Ascending aorta (tissue), 2 donors: ENCODE measurements at regions of chr3 and their contacts with region 1.

Region 1: DNA sequence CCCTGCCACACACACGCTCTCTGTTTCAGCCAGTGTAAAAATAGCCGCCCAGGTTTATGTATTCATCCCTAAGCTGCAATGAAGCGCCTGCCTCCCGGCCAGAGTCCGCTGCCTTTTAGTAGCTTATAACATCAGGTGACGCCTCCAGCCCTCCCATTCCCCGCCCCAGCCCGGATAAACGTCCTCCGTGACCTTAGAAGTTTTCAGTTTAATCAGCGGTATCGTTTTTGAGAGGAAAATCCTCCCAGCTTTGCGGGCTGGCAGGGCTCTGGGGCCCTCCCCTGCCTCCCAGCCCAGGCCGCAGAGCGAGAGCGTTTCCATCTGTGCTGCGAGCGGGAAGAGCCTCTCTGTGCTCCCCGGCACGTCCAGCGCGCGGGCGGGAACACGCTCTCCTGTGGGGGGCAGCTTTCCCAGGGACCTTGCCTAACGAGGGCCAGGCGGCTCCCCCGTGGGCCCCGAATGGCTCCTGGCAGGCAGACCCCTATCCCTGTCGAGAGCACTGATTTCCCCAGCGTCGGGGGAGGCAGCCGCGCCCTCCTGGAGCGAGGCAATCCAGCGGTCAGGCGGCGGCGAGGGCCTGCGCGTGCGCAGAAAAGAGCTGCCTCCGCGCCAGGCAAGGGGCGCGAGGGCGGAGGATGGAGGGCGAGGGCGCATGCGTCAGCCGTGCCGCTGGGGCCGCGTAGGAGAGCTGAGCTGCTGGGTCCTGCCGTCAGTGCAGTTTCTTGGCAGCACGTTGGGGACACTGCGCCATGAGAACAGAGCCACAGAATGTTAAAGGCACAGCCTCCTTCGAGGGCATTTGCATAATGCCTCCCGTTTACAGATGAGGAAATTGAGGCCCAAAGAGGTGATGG is 71.1 kb downstream of the CCNL1 start:
- DNase-seq: peak; percentile 88 to 98
- H3K4me3 ChIP-seq: peak overlapping the region; percentile 74 to 75
- H3K27ac ChIP-seq: peak overlapping the region; percentile 97
- H3K4me1 ChIP-seq: peaks cover 12 to 31% of the 10 kb centered on the region in 2 donors
- H3K27me3 ChIP-seq: no peaks in the 10 kb centered on the region
- CTCF ChIP-seq: peak in 2 of 3 experiments; percentile 11 to 15

Region 2: GRCh38 chr3:155854141-155854940 is 1234.5 kb before region 1 on chr3 and contains the start of gene SLC33A1:
- intact Hi-C with region 1: loop called (anchors 5 kb)
- DNase-seq: peak; percentile 97 to 100
- H3K4me3 ChIP-seq: peak within 1 kb of the TSS; percentile 84 to 89
- H3K27ac ChIP-seq: peak within 1 kb of the TSS; percentile 89 to 93
- H3K4me1 ChIP-seq: peaks cover 10 to 36% of the 10 kb centered on the region in 2 donors
- H3K27me3 ChIP-seq: no peaks in the 10 kb centered on the region
- CTCF ChIP-seq: no peak
- total RNA-seq, gene SLC33A1: 15.6 TPM

Region 3: GRCh38 chr3:156535162-156535627 is 553.6 kb before region 1 on chr3:
- intact Hi-C with region 1: loop called (anchors 5 kb)
- DNase-seq: peak; percentile 48 to 90
- H3K4me3 ChIP-seq: no peak overlapping the region
- H3K27ac ChIP-seq: peak overlapping the region; percentile 62 to 78
- H3K4me1 ChIP-seq: peaks cover 0 to 5% of the 10 kb centered on the region in 2 donors
- H3K27me3 ChIP-seq: no peaks in the 10 kb centered on the region
- CTCF ChIP-seq: peak; percentile 26 to 41 (median 37)

Region 4: DNA sequence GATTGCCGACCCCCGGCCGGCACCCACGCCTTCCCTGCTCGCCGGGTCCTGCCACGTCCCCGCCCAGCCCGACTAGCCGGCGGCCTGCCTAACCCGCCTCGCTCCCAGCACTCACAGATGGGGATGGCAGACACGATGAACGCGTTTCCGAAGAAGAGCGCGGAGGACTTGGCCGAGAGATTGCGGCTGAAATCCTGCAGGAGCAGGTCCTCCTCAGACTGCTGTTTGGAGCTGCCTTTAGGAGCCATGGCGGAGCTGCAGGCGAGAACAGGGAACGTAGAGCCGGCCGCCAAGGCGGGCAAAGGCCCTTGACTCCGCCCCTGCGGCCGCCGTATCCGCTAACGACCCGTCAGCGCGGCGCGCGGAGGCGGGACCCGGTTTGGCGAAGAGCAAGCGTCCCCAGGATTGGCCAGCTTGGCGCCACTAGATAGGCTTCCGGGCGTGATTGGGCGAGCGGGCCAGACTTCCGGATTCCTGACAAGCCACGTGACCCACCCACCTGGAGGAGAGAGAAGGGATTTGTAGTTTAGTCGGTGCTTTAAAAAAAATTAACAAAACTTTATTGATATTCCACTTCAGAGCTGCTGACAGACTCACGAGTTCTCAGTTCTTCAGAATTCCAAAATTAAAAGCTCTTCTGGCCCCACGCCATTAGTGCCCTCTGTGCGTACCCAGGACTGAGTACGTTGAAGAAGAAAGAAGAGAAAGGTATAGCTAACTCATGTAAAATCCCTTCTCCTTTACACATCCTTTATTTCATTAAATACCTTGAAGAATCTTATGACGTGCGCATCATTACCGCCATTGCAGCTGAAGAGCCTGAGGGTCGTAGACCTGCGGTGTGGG is 533.8 kb before region 1 on chr3 and contains the start of gene SSR3:
- intact Hi-C with region 1: loop called (anchors 2 kb)
- DNase-seq: peak; percentile 98 to 100
- H3K4me3 ChIP-seq: peak within 1 kb of the TSS; percentile 84 to 95
- H3K27ac ChIP-seq: peak within 1 kb of the TSS; percentile 71 to 83
- H3K4me1 ChIP-seq: peaks cover 0 to 11% of the 10 kb centered on the region in 2 donors
- H3K27me3 ChIP-seq: no peaks in the 10 kb centered on the region
- CTCF ChIP-seq: peak in 1 of 3 experiments; percentile 54
- total RNA-seq, gene SSR3: 155 TPM

Region 5: DNA sequence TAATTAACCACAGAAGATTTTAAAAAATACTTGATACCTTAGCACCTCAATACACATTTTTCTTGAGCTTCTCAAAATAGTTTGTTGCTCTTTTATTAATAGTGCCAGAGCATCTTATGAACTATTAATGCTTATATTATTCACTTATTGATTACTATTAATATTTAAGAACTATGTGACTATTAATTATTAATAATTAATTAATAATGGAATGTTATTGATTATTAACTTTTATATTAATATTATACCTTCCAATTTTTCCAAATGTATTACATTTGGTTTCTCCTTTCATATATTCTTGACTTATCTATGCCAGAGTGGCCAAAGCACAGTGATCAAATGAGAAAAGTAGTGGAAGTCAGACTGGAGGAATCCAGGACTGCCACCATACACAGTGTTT is 67.1 kb before region 1 on chr3:
- intact Hi-C with region 1: no loop called
- DNase-seq: no peak
- H3K4me3 ChIP-seq: no peak overlapping the region
- H3K27ac ChIP-seq: no peak overlapping the region
- H3K4me1 ChIP-seq: no peaks in the 10 kb centered on the region
- H3K27me3 ChIP-seq: no peaks in the 10 kb centered on the region
- CTCF ChIP-seq: no peak

Region 6: DNA sequence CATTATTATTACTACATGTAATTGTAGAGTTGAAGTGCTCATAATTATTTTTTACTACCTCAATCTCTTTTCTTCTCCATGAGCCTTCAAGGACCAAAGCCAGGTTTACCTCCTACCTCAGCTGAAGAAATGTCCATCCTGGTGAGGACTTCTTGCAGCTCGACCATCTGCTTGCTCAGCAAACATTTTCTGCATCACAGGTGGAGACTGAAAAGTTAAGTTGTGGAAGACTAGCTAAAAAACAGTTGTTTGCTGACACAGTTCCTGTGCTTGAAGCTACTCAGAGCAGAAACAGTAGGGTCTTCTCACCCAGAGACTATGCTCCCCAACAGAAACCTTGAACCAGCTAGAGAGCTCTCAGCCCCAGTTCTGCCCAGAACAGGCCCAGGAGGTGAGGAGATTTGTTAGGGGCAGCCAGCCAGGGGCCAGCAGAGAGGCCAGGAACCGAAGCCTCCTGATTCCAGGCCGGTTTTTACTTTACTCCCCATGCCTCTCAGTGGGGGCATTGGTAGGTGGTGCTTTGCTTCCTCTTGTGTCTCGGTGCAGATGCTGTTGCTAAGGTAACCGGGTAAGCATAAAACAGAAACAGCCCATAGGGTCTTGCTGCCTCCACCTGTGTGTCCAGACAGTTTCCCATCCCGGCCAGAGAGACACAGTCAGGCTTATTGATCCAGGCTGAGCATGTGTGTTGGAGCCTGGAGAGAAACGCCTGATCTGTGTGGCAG is 16.3 kb after region 1 on chr3:
- intact Hi-C with region 1: no loop called
- DNase-seq: no peak
- H3K4me3 ChIP-seq: no peak overlapping the region
- H3K27ac ChIP-seq: no peak overlapping the region
- H3K4me1 ChIP-seq: no peaks in the 10 kb centered on the region
- H3K27me3 ChIP-seq: no peaks in the 10 kb centered on the region
- CTCF ChIP-seq: no peak

Region 7: GRCh38 chr3:157136647-157137387 is 48.0 kb after region 1 on chr3:
- intact Hi-C with region 1: loop called (anchors 1 kb)
- DNase-seq: no peak
- H3K4me3 ChIP-seq: no peak overlapping the region
- H3K27ac ChIP-seq: peak overlapping the region; percentile 23 to 62
- H3K4me1 ChIP-seq: peaks cover 14 to 20% of the 10 kb centered on the region in 2 donors
- H3K27me3 ChIP-seq: no peaks in the 10 kb centered on the region
- CTCF ChIP-seq: no peak

Region 8: GRCh38 chr3:157159762-157160657 is 71.2 kb after region 1 on chr3 and contains the start of gene CCNL1:
- intact Hi-C with region 1: loop called (anchors 1 kb)
- DNase-seq: peak; percentile 86 to 99
- H3K4me3 ChIP-seq: peak within 1 kb of the TSS; percentile 86 to 100
- H3K27ac ChIP-seq: peak within 1 kb of the TSS; percentile 99 to 100
- H3K4me1 ChIP-seq: peaks cover 6 to 38% of the 10 kb centered on the region in 2 donors
- H3K27me3 ChIP-seq: no peaks in the 10 kb centered on the region
- CTCF ChIP-seq: no peak
- total RNA-seq, gene CCNL1: 241 TPM

Region 9: GRCh38 chr3:157174649-157175498 is 86.0 kb after region 1 on chr3:
- intact Hi-C with region 1: loop called (anchors 2 kb)
- DNase-seq: peak; percentile 94 to 99
- H3K4me3 ChIP-seq: peak overlapping the region; percentile 75 to 76
- H3K27ac ChIP-seq: peak overlapping the region; percentile 96 to 98
- H3K4me1 ChIP-seq: peaks cover 0 to 17% of the 10 kb centered on the region in 2 donors
- H3K27me3 ChIP-seq: no peaks in the 10 kb centered on the region
- CTCF ChIP-seq: no peak

Region 10: DNA sequence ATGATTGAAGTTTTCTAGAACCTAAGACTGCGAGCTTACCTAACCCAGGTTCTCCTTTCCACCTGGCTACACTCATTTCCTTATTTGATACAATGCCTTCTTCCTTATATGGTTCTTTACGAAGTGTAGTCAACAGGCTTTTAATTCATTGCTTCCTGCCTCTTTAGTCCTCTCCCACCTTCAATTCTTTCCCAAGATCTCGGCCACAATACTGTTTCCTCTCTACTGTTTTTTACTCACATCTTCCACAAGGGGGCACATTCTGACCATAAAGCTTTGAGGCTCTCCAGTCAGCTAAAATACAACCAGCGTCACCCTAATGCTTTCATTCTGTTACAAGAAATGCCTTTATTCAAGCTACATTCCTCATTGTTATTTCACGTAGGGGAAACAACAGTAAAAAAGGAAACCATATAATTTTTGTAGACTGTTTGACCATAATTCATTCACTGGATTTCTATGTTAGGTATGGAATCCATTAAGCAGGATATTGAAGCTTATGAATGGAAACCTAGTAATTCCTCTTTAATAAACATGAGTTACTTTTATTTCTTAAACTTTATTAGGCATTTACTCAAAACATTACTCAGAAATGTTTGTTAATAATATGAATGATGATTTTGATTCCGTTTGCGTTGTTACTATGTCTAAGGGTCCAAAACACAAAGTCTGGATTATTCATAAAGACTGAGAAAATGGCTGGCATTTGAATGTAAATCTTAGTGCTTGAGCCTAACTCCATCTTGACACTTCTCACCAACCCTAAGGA is 443.9 kb after region 1 on chr3:
- intact Hi-C with region 1: no loop called
- DNase-seq: no peak
- H3K4me3 ChIP-seq: no peak overlapping the region
- H3K27ac ChIP-seq: no peak overlapping the region
- H3K4me1 ChIP-seq: peaks cover 0 to 2% of the 10 kb centered on the region in 2 donors
- H3K27me3 ChIP-seq: no peaks in the 10 kb centered on the region
- CTCF ChIP-seq: peak; percentile 50 to 79 (median 65)